ENCODE measurements at regions of chr6 and their contacts with region 1.

Region 1: GRCh38 chr6:125165256-125165655 is 11.7 kb downstream of the TPD52L1 start:
- DNase-seq: no peak
- CTCF ChIP-seq: no peak

Region 2: DNA sequence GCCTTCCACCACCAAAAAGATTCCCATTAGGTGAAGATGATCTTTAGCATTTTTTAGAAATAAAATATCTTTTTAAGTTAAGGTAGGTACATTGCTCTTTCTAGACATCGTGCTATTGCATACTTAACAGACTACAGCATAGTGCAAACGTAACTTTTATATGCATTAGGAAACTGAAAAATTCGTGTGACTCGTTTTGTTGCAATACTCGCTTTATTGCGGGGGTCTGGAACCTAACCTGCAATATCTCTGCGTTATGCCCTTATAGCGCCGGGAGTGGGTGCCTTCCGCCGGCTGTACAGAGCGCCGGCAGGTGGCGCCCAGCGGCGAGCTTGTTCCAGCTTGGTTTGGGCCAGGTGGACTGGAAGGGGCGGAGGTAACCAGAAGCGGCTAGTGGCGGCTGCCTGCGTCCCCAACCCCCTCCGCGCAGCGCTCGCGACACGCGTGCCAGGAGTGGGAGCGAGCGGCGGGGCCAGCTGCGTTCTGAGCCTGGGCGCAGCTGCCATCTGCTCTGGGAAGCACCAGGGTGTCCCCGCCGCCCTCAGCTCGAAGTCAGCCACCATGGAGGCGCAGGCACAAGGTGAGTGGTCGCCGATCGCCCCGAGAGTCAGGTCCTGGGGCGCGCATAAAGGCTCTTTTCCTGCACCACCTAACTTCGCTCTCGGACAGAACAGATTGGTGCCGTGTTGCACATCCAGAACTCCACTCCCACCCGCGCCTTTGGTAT is 11.7 kb before region 1 on chr6 and contains the start of gene TPD52L1:
- CTCF ChIA-PET with region 1: interaction called, 14 read pairs
- POLR2A ChIA-PET with region 1: no interaction called
- DNase-seq: peak; percentile 82
- CTCF ChIP-seq: peak; percentile 97